ENCODE measurements at regions of chr9 and their contacts with region 1.

Region 1: DNA sequence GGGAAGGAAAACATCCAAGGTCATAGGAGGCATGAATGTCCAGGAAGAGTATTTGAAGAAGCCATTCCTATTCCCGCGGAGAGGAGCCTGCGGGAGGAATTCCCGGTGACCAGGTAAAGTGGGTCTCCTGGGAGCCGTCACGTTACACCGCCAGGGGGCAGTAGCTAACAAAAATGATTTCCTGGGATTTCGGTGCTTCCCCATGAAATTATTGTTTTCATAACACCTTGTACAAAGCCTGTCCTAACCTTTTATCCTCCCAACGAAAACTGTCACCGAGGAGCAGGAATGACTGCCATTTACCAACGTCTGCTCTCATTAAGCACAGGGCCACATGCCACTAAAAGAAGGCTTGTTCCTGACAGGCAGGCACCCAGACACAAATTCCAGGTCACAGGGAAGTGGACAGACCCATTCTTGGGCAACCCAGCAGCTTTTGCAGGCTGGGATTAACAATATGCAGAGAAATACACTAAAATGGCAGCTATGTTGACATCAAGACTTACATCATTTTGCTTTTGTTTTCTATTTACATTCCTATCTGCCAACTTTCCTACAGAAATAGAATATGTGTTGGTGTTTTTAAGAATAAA is 41.2 kb upstream of the CTSL start:
- DNase-seq: peak; percentile 22
- H3K4me3 Mint-ChIP-seq: no peak overlapping the region
- H3K27ac Mint-ChIP-seq: no peak overlapping the region
- H3K4me1 Mint-ChIP-seq: peaks cover 24% of the 10 kb centered on the region
- H3K27me3 Mint-ChIP-seq: no peaks in the 10 kb centered on the region

Region 2: DNA sequence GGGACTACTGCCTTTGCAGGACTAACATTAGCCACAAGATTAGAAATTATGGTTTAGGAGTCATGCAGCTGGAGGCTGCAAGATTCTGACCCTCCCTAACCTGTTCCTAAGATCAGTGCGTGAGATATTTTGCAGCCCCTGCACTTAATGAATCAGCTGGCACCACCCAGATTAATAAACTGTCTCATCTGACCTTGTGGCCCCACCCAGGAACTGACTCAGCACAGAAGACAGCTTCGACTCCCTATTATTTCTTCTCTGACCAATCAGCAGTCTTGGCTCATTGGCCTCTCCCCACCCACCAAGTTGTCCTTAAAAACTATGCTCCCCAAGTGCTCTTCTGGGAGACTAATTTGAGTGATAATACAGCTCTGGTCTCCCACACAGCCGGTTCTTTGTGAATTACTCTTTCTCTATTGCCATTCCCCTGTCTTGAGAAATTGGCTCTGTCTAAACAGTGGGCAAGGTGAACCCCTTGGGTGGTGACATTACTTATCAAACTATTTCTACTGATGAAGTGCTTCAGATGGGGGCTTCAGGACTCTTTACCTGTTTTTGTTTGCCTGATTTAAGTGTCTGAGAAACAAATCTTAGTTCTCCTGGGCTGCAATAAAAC is 58.2 kb after region 1 on chr9:
- CTCF ChIA-PET with region 1: no interaction called
- intact Hi-C with region 1: loop called (anchors 10 kb)
- DNase-seq: no peak
- H3K4me3 Mint-ChIP-seq: no peak overlapping the region
- H3K27ac Mint-ChIP-seq: no peak overlapping the region
- H3K4me1 Mint-ChIP-seq: peaks cover 10% of the 10 kb centered on the region
- H3K27me3 Mint-ChIP-seq: peaks cover 7% of the 10 kb centered on the region

Region 3: DNA sequence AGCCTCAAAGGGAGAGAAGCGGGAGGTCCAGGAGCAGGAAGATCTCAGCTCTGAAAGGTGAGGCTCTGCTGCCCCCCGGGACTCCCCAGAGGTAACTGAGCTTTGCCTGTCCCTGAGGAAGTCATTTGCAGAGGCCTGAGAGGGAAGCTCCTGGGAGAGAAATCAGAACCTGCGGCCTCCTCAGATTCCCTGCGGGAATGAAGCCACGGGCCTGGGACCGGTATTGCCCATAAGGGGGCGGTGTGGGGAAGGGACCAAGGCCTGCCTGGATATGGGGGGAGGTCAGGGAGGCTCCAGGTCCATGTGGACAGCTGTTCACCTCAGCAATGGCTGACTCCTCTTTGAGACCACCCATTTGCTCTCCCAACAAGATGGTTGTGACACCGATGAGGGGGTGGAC is 199.3 kb after region 1 on chr9:
- CTCF ChIA-PET with region 1: no interaction called
- intact Hi-C with region 1: loop called (anchors 10 kb)
- DNase-seq: no peak
- H3K4me3 Mint-ChIP-seq: no peak overlapping the region
- H3K27ac Mint-ChIP-seq: no peak overlapping the region
- H3K4me1 Mint-ChIP-seq: peaks cover 6% of the 10 kb centered on the region
- H3K27me3 Mint-ChIP-seq: no peaks in the 10 kb centered on the region

Region 4: DNA sequence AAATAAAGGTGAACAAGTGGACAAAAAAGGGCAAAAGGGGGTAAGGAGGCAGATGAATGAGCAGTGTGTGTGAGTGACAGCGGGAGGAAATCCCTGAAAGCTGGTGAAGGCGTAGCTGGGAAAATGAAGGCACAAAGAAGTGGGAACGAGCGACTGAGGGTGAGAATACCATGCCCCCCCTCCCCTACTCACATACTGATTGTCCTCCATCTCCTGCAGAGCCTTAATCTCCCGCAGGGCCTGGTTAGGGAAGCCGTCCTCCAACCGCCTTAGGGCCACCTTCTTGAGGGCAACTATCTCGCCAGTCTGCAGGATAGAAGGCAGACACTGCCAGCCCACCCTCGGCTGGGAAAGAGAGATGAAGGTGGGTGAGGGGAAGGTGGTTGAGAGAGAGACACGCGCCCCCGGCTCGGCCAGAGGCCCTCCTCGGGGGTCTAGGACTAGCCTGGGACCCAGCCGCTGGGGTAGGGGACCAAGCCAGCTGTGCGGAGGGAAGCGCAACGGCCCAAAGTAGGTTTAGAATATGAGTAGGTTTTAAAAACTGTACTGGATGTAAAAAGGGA is 289.1 kb after region 1 on chr9:
- CTCF ChIA-PET with region 1: no interaction called
- intact Hi-C with region 1: loop called (anchors 10 kb)
- DNase-seq: no peak
- H3K4me3 Mint-ChIP-seq: peak overlapping the region; percentile 93
- H3K27ac Mint-ChIP-seq: no peak overlapping the region
- H3K4me1 Mint-ChIP-seq: peaks cover 19% of the 10 kb centered on the region
- H3K27me3 Mint-ChIP-seq: no peaks in the 10 kb centered on the region

Region 5: DNA sequence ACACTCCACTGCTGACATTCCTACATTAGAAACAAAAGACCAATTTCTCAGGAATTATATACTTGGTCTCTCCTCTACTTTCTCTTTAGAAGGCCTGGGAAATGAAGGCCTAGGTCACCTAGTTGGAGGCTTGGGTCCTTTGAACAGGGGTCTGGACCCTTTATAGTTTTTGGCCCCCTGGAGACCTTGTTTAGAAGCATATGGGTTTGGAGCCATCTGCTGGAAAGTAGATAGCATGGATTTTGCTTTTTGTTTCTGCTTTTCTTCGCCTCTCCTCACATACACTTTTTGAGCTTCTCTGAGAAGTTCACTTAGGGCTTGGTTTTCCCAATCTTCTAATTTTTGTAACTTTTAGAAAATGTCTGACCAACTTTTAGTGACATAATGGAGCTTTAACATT is 356.7 kb after region 1 on chr9:
- CTCF ChIA-PET with region 1: no interaction called
- intact Hi-C with region 1: loop called (anchors 2 kb)
- DNase-seq: no peak
- H3K4me3 Mint-ChIP-seq: no peak overlapping the region
- H3K27ac Mint-ChIP-seq: no peak overlapping the region
- H3K4me1 Mint-ChIP-seq: no peaks in the 10 kb centered on the region
- H3K27me3 Mint-ChIP-seq: peaks cover 5% of the 10 kb centered on the region